ENCODE measurements at regions of chr4 and their contacts with region 1.

Region 1: DNA sequence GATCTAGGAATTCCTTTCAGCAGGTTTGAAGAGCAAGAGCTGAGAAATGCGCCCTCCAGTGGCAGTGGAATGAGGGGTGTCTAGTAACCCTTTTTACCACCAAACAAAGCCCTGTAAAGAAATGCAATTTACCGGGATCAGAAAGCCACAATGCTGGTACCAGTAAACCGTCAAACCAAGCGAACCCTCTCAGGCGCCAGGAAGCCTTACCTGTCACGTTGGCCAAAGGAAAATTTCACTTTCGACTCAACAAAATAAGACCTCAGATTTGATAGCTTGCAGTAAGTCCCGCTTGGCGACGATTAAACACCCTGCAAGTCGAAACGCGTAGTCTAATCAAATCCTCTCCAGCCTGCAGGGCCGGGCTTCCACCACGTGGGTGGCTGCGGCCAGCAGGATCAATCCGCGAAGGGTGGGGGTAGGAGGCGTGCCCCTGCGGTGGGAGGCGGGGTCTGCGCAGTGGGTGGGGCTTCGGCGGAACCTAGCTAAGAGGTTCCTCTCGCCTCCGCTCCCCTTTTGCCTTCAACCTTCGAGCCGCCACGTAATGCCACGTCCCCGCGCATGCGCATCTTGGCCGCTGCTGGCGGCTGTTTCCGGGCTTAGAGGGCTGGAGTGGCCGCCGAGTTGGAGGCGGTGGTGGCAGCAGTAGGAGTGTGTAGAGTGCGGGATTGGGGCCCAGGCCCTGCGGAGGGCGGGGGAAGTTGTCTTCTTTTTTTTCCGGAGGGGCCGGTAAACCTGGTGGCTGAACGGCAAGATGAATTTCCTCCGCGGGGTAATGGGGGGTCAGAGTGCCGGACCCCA is at the start of gene USO1:
- DNase-seq: peak; percentile 99
- ATAC-seq: peak; percentile 87
- H3K4me3 Mint-ChIP-seq: peak within 1 kb of the TSS; percentile 99
- H3K27ac Mint-ChIP-seq: peak within 1 kb of the TSS; percentile 99
- H3K4me1 Mint-ChIP-seq: peaks cover 48% of the 10 kb centered on the region
- H3K27me3 Mint-ChIP-seq: no peaks in the 10 kb centered on the region
- total RNA-seq, gene USO1: 30.1 to 43.1 TPM

Region 2: GRCh38 chr4:75630174-75630936 is 93.9 kb before region 1 on chr4 and contains the start of gene CDKL2:
- CTCF ChIA-PET with region 1: interaction called, 10 read pairs
- DNase-seq: peak; percentile 94
- ATAC-seq: peak; percentile 100
- H3K4me3 Mint-ChIP-seq: peak within 1 kb of the TSS; percentile 84
- H3K27ac Mint-ChIP-seq: peak within 1 kb of the TSS; percentile 73
- H3K4me1 Mint-ChIP-seq: peaks cover 17% of the 10 kb centered on the region
- H3K27me3 Mint-ChIP-seq: peaks cover 5% of the 10 kb centered on the region
- total RNA-seq, gene CDKL2: 0.16 to 1.5 TPM

Region 3: DNA sequence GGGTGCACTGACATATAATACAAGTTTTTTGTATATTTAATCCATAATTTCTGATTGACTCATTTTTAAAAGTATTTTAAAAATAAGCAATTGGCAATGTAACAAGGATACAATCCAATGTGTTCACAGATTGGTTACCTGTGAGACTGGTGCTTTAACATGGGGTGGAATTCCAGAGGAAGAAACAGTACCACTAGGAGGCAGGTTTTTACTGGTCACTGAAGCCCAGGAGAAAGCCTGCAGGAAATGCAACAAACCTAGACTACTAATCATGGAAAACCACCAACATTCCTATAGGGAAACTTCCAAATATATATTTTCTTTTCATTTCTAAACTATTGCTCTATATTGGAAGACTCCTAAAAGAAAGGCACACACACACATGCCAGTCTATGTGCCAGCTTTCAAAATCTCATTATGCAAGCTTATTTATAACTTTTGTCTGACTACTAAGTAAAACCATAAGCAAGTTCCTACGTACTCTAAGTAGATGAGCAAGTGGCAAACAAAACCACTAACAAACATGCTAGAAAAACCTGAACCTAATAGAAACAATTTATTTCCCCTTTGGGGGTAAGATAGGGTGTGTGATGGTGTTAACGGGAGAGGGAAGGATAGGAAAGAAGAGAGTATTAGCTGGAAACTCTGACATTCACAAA is 70.3 kb before region 1 on chr4:
- CTCF ChIA-PET with region 1: interaction called, 13 read pairs
- DNase-seq: no peak
- ATAC-seq: peak; percentile 16
- H3K4me3 Mint-ChIP-seq: peak overlapping the region; percentile 52
- H3K27ac Mint-ChIP-seq: peak overlapping the region; percentile 94
- H3K4me1 Mint-ChIP-seq: peaks cover 63% of the 10 kb centered on the region
- H3K27me3 Mint-ChIP-seq: no peaks in the 10 kb centered on the region

Region 4: DNA sequence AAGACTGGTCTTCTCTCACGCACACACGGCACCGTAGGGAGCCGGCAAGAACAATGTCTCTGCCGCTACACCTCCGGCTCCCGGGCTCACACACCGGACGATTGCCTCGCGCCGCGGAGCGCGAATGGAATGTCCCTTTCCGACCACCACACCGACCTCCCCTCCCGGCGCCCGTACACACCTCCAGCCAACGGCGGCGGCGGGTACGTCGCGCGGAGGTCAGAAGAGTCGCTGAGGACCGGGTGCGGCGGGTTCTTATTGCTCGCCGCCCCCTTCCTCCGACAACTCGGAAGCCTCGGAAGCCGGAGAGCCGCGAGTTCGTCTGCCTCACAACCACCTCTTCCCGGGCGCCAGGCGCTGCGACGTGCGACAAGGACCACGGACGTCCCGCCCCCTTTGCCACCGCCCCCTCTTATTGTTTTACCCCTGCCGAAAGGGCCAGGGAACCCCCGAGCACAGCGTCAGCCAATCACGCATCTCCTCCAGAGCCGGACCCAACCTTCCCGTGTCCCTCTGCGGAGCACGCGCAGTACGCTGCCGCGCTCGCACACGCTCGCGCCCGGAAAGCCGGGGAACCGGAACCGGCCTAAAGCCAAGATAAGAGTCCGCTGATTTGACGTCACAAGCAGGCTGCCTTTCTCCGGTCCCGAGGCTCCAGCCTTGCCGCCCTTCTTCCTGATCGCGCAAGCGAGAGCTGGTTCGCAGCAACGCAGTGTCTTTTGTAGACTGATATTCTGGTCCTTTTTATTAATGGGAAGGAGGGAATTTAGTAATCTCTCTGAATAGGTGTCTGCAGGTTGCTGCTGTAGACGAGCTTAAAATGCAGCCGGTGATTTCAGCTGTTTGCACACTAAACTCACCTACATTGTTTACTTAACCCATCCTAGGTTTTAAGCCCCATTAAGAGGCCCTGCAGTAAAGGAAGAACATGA is 51.0 kb before region 1 on chr4 and contains the start of gene G3BP2:
- CTCF ChIA-PET with region 1: interaction called, 16 read pairs
- DNase-seq: peak; percentile 99
- ATAC-seq: peak; percentile 96
- H3K4me3 Mint-ChIP-seq: peak within 1 kb of the TSS; percentile 96
- H3K27ac Mint-ChIP-seq: peak within 1 kb of the TSS; percentile 96
- H3K4me1 Mint-ChIP-seq: peaks cover 41% of the 10 kb centered on the region
- H3K27me3 Mint-ChIP-seq: no peaks in the 10 kb centered on the region
- total RNA-seq, gene G3BP2: 148 to 230 TPM

Region 5: DNA sequence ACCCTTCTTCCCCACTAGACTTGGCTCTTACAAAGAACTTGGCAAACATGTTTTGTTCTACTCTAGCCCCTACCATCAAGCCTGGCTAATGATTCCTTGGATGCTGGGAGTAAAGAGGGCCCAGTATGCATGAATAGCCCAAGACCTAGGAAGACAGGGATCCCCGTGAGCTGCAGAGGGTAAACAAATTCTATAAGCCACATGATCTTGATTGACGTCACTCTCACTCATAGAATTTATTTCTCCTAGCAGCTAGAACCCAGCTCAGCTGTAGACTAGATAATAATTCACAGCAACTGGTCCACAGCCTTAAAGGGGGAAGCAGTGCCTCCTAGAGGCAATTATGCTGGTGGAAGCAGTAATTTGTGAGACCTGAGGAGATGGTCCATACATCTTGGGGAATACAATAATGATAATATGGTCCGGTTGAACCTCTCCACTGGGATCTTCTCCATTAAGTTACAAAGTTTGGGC is 16.0 kb before region 1 on chr4:
- CTCF ChIA-PET with region 1: interaction called, 55 read pairs
- DNase-seq: peak; percentile 62
- ATAC-seq: peak; percentile 89
- H3K4me3 Mint-ChIP-seq: no peak overlapping the region
- H3K27ac Mint-ChIP-seq: no peak overlapping the region
- H3K4me1 Mint-ChIP-seq: peaks cover 11% of the 10 kb centered on the region
- H3K27me3 Mint-ChIP-seq: no peaks in the 10 kb centered on the region

Region 6: GRCh38 chr4:75844151-75844662 is 119.9 kb after region 1 on chr4:
- CTCF ChIA-PET with region 1: interaction called, 10 read pairs
- DNase-seq: no peak
- ATAC-seq: no peak
- H3K4me3 Mint-ChIP-seq: no peak overlapping the region
- H3K27ac Mint-ChIP-seq: peak overlapping the region; percentile 34
- H3K4me1 Mint-ChIP-seq: peaks cover 16% of the 10 kb centered on the region
- H3K27me3 Mint-ChIP-seq: no peaks in the 10 kb centered on the region

Measured in activated CD8-positive, alpha-beta memory T cell treated with anti-CD3 and anti-CD28 coated beads, Interleukin-2, amount 10 ng/mL, durations not matched to agents 7 days and 5 days (primary cell).